Mammary epithelial cell (primary cell): ENCODE measurements at regions of chr14 and their contacts with region 1.

Region 1: GRCh38 chr14:77124345-77125280 is 17.0 kb downstream of the ZDHHC22 start:
- DNase-seq: peak; percentile 8
- H3K4me3 ChIP-seq: peak overlapping the region in 2 of 3 experiments; percentile 37 to 40
- H3K27ac ChIP-seq: no peak overlapping the region
- H3K4me1 ChIP-seq: peaks cover 32% of the 10 kb centered on the region
- H3K27me3 ChIP-seq: no peaks in the 10 kb centered on the region
- CTCF ChIP-seq: peak; percentile 34 to 42

Region 2: DNA sequence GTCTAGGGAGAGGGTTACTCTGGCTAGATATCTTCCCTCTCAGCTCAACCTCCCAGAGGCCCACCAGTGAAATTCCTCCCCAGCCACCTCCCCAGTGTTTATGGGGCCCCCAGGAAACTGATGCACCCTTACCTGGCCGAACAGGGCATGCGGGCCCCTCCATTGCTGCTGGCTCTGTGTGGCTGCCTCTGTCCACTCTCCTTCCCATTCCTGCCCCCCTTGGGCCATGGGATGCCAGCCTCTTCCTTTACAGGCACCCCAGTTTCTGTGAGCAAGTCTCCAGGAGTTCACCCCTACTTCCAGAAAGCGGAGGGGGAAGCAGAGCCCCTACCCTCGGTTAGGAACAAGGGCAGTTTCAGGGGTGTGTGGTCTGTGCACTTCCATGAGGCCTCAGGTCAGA is 36.4 kb after region 1 on chr14:
- CTCF ChIA-PET with region 1: no interaction called
- dilution Hi-C with region 1: loop called (anchors 5 kb)
- in situ Hi-C with region 1: no loop called
- intact Hi-C with region 1: no loop called
- DNase-seq: no peak
- H3K4me3 ChIP-seq: no peak overlapping the region
- H3K27ac ChIP-seq: no peak overlapping the region
- H3K4me1 ChIP-seq: peaks cover 4% of the 10 kb centered on the region
- H3K27me3 ChIP-seq: no peaks in the 10 kb centered on the region
- CTCF ChIP-seq: no peak